ENCODE measurements at regions of chr2 and their contacts with region 1.

Region 1: GRCh38 chr2:85635636-85636035 is 19.6 kb downstream of the USP39 start:
- DNase-seq: no peak
- ATAC-seq: no peak
- H3K4me3 ChIP-seq: no peak overlapping the region
- H3K27ac ChIP-seq: no peak overlapping the region
- H3K4me1 ChIP-seq: no peaks in the 10 kb centered on the region
- H3K27me3 ChIP-seq: no peaks in the 10 kb centered on the region
- CTCF ChIP-seq: no peak

Region 2: GRCh38 chr2:85694052-85695025 is 58.7 kb after region 1 on chr2 and contains the start of gene GNLY:
- intact Hi-C with region 1: no loop called
- DNase-seq: no peak
- ATAC-seq: peak; percentile 31 to 73 (median 46)
- H3K4me3 ChIP-seq: no peak within 1 kb of the TSS
- H3K27ac ChIP-seq: no peak within 1 kb of the TSS
- H3K4me1 ChIP-seq: no peaks in the 10 kb centered on the region
- H3K27me3 ChIP-seq: no peaks in the 10 kb centered on the region
- CTCF ChIP-seq: no peak
- total RNA-seq, gene GNLY: 0.58 to 20.0 (median 5.8) TPM

Region 3: DNA sequence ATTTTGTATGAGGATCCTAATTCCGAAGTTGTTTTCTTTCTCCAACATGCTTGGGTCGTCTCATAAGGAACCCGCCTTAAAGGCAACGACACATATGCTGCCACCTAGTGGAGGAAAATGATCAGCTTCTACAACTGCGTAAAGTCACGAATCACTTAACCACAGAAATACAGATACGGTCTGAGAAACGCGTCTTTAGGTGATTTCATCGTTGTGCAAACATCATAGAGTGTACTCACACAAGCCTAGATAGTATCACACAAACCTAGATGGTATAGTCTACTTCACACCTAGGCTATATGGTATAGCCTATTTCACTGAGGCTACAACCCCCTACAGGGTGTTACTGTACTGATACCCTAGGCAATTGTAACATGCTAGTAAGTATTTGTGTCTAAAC is 71.7 kb after region 1 on chr2:
- intact Hi-C with region 1: loop called (anchors 5 kb)
- DNase-seq: no peak
- ATAC-seq: peak; percentile 39 to 68 (median 62)
- H3K4me3 ChIP-seq: no peak overlapping the region
- H3K27ac ChIP-seq: peak overlapping the region; percentile 87
- H3K4me1 ChIP-seq: peaks cover 65% of the 10 kb centered on the region
- H3K27me3 ChIP-seq: no peaks in the 10 kb centered on the region
- CTCF ChIP-seq: peak; percentile 89

Region 4: DNA sequence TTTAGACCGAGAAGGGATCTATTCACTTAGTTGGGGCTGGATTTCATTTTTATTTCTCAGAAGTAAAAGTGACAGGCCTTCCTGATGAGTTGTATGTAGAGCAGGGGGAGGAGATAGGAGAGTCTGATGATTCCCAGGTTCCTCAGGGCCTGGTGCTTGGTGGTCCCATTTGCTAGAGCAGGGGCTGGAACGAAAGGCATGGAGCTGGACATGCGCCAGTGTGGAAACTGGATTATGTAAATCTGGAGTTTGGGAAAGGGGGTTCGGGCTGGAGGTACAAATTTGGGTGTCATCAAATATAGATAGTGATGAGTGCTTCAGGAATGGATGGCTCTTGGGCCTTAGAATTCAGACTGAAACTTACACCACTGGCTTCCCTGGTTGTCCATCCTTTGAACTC is 86.0 kb after region 1 on chr2:
- intact Hi-C with region 1: loop called in 1 of 2 experiments (anchors 1 kb)
- DNase-seq: no peak
- ATAC-seq: no peak
- H3K4me3 ChIP-seq: no peak overlapping the region
- H3K27ac ChIP-seq: no peak overlapping the region
- H3K4me1 ChIP-seq: peaks cover 17% of the 10 kb centered on the region
- H3K27me3 ChIP-seq: no peaks in the 10 kb centered on the region
- CTCF ChIP-seq: no peak

Measured in psoas muscle (tissue), 8 donors.